ENCODE measurements at regions of chr2 and their contacts with region 1.

Region 1: GRCh38 chr2:48471048-48471474 is 58.9 kb upstream of the STON1 start:
- DNase-seq: no peak
- H3K4me3 ChIP-seq: no peak overlapping the region
- H3K27ac ChIP-seq: no peak overlapping the region
- H3K27me3 ChIP-seq: no peaks in the 10 kb centered on the region
- CTCF ChIP-seq: peak; percentile 62

Region 2: GRCh38 chr2:48420512-48421197 is 50.4 kb before region 1 on chr2:
- CTCF ChIA-PET with region 1: interaction called, 11 read pairs
- POLR2A ChIA-PET with region 1: interaction called, 3 read pairs
- DNase-seq: peak; percentile 63
- H3K4me3 ChIP-seq: no peak overlapping the region
- H3K27ac ChIP-seq: no peak overlapping the region
- H3K27me3 ChIP-seq: no peaks in the 10 kb centered on the region
- CTCF ChIP-seq: peak; percentile 98

Region 3: DNA sequence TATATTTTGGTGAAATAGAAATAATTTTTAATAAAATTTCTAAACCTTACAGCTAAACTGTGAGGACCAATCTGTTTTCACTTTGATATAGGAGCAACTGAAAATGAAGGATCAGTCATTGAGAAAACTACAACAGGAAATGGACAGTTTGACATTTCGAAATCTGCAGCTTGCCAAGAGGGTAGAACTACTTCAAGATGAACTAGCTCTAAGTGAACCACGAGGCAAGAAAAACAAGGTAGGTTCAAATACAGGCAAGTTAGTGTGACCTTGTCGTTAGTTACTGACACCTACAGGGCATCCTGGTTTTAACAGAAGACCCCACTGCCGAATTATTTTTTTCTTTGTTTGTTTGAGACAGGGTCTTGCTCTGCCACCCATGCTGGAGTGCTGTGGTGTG is 16.6 kb before region 1 on chr2:
- CTCF ChIA-PET with region 1: interaction called, 93 read pairs
- POLR2A ChIA-PET with region 1: no interaction called
- DNase-seq: no peak
- H3K4me3 ChIP-seq: no peak overlapping the region
- H3K27ac ChIP-seq: no peak overlapping the region
- H3K27me3 ChIP-seq: no peaks in the 10 kb centered on the region
- CTCF ChIP-seq: no peak

Region 4: GRCh38 chr2:48496849-48497248 is 25.8 kb after region 1 on chr2:
- CTCF ChIA-PET with region 1: interaction called, 13 read pairs
- POLR2A ChIA-PET with region 1: no interaction called
- DNase-seq: no peak
- H3K4me3 ChIP-seq: no peak overlapping the region
- H3K27ac ChIP-seq: no peak overlapping the region
- H3K27me3 ChIP-seq: no peaks in the 10 kb centered on the region
- CTCF ChIP-seq: no peak

Region 5: DNA sequence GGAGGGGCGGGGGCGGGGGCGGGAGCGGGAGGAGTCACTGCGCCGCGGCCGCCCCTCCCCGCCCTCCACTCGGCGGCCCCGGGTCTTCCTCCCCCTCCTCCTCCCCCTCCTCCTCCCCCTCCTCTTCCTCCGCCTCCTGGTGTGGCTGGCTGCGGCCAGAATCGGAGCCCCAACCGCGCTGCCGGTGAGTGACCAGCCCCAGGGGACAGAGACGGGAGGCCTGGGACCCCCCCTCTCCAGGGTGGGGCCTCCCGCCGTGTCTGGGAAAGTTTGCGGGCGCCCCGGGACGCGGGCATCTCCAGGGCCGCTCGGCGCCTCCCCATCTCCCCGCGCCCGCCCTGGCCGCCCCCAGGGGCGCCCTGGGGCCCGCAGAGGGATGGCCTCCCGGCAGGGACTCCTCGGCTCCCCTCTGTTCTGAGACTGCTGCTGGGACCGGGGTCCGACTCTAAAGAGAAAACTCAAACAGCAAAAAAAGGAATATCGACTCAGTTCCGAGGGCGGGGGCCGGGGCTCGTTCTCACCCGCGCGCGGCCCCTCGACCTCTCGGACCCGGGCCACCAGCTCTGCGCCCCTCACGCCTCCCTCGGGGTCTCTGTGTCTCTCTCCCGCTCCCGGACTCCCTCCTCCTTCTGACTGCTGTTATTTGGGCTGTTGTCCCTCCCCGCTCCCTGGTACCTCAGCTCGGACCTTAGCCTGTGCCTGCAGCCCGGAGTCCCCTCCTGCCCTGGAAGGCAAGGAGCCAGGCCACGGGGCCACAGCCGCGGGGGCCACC is 59.2 kb after region 1 on chr2 and contains the start of gene STON1:
- CTCF ChIA-PET with region 1: interaction called, 11 read pairs
- POLR2A ChIA-PET with region 1: no interaction called
- DNase-seq: no peak
- H3K4me3 ChIP-seq: peak within 1 kb of the TSS; percentile 84
- H3K27ac ChIP-seq: peak within 1 kb of the TSS; percentile 11
- H3K27me3 ChIP-seq: no peaks in the 10 kb centered on the region
- CTCF ChIP-seq: peak; percentile 20; the same call in 1 of the 2 replicates
- polyA plus RNA-seq, gene STON1: 13.5 and 17.8 TPM in 2 replicates

Region 6: DNA sequence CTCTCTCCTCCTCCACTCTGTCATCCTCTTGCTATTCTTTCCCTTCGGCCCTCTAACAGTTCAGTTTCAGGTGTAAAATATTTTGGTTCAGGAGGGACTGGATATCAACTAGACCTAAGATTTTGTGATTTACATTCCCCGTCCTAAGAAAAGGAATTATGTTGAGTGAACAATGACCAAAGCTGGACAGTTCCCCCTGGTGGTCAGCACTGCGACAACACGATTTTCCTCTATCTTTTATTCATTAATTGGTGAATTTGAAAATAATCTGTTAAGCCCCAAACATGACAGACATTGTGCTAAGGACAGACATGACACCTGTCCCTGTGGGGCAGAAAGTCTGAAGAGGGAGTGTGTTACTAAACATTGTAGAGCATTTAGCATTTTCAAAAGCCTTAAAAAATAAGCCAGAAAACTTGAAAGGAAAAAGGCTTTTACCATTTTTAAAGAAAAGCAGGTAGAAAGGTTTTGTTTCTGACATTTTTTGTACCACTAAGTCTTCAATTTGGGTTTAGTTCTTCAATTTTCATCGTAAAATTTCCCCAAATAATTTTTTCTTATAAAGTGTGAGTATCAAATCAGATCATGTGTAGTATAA is 118.2 kb after region 1 on chr2:
- CTCF ChIA-PET with region 1: interaction called, 34 read pairs
- POLR2A ChIA-PET with region 1: no interaction called
- DNase-seq: no peak
- H3K4me3 ChIP-seq: no peak overlapping the region
- H3K27ac ChIP-seq: no peak overlapping the region
- H3K27me3 ChIP-seq: no peaks in the 10 kb centered on the region
- CTCF ChIP-seq: peak; percentile 82